Heart left ventricle (tissue), 16 donors: ENCODE measurements at regions of chr1 and their contacts with region 1.

Region 1: GRCh38 chr1:55468142-55468795 is 253.1 kb upstream of the USP24 start:
- DNase-seq: no peak
- ATAC-seq: no peak
- H3K4me3 ChIP-seq: no peak overlapping the region
- H3K27ac ChIP-seq: no peak overlapping the region
- H3K4me1 ChIP-seq: no peaks in the 10 kb centered on the region
- H3K27me3 ChIP-seq: no peaks in the 10 kb centered on the region
- CTCF ChIP-seq: no peak
- POLR2A ChIP-seq: no peak

Region 2: DNA sequence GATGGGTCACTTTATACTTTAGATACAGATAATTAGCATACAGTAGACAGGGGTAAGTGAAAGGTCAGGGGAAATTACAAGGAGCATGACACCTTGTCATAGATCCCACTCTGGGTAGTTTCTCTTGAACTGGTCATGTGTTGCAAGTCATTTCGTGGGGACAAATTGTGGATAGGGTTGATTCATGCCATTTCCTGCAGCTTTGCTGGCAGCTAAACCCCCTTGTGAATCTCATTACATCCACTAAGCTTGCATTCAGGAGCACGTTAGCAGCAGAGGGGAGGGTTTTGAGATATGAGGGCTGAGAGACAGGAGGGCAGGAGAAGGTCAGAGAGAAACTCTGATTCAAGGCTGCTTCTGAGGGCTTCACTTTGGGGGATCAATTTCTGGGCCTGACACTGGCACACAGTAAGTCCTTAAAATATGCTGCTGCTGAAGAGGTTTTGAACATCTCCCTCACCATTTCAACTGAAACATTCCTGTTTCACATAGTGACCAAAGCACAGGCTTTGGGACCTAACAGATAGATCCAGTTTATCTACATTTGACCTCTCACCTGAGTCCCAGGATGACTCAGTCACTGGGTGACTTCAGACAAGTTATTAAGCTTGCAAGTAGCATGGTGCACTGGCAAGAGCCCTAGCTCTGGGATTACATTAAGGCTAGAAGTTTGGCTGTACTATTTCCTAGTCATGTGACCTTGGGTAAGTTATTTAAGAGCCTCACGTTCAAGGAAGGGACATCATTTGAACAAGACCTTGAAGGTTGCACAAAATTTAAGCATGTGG is 47.1 kb before region 1 on chr1:
- intact Hi-C with region 1: no loop called
- DNase-seq: no peak
- ATAC-seq: no peak
- H3K4me3 ChIP-seq: no peak overlapping the region
- H3K27ac ChIP-seq: no peak overlapping the region
- H3K4me1 ChIP-seq: no peaks in the 10 kb centered on the region
- H3K27me3 ChIP-seq: peaks cover 0 to 3% (median 0%) of the 10 kb centered on the region in 9 donors
- CTCF ChIP-seq: no peak
- POLR2A ChIP-seq: no peak

Region 3: DNA sequence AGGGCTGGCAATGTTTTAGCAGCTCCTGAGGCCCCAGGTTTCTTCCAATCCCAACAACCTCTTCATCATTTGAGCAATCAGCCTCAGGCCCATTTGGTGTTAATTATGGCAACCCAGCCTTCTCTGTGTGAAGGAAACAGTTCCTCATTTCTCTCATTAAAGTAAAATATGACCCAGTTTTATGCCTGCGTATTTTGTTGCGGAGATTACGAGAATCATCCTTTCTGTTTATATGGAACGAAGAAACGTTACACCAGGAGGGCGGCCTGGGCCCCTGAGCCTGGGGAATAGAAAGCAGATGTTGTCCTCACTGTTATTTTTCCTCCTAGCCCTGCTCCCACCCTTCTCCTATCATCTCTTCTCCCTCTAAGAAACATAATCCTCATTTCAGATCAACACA is 79.1 kb after region 1 on chr1:
- intact Hi-C with region 1: loop called in 1 of 10 experiments (anchors 5 kb)
- DNase-seq: no peak
- ATAC-seq: no peak
- H3K4me3 ChIP-seq: no peak overlapping the region
- H3K27ac ChIP-seq: peak overlapping the region in 1 of 12 donors; percentile 9
- H3K4me1 ChIP-seq: no peaks in the 10 kb centered on the region
- H3K27me3 ChIP-seq: no peaks in the 10 kb centered on the region
- CTCF ChIP-seq: no peak
- POLR2A ChIP-seq: no peak

Region 4: DNA sequence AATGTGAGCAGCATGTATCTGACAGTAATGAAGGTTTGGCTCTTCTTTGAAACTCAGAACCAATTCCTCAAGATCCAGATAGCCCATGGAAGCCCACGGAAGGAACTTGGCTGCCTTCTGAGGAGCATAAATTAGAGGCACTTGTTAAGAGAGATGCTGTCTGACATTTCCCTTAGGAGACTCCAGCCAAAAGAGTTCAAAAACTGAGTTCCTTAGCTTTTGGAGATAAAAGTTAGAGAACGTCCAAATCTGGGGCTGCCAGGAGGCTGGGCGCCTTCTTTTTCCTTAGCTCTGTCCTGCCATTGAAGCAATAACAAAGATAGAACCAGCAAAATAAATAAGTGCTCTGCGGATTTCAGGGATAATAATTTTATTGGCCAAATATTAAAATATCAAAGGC is 186.5 kb after region 1 on chr1:
- intact Hi-C with region 1: no loop called
- DNase-seq: no peak
- ATAC-seq: no peak
- H3K4me3 ChIP-seq: no peak overlapping the region
- H3K27ac ChIP-seq: no peak overlapping the region
- H3K4me1 ChIP-seq: peaks cover 0 to 8% (median 0%) of the 10 kb centered on the region in 12 donors
- H3K27me3 ChIP-seq: no peaks in the 10 kb centered on the region
- CTCF ChIP-seq: no peak
- POLR2A ChIP-seq: no peak